ENCODE measurements at regions of chr10 and their contacts with region 1.

Region 1: DNA sequence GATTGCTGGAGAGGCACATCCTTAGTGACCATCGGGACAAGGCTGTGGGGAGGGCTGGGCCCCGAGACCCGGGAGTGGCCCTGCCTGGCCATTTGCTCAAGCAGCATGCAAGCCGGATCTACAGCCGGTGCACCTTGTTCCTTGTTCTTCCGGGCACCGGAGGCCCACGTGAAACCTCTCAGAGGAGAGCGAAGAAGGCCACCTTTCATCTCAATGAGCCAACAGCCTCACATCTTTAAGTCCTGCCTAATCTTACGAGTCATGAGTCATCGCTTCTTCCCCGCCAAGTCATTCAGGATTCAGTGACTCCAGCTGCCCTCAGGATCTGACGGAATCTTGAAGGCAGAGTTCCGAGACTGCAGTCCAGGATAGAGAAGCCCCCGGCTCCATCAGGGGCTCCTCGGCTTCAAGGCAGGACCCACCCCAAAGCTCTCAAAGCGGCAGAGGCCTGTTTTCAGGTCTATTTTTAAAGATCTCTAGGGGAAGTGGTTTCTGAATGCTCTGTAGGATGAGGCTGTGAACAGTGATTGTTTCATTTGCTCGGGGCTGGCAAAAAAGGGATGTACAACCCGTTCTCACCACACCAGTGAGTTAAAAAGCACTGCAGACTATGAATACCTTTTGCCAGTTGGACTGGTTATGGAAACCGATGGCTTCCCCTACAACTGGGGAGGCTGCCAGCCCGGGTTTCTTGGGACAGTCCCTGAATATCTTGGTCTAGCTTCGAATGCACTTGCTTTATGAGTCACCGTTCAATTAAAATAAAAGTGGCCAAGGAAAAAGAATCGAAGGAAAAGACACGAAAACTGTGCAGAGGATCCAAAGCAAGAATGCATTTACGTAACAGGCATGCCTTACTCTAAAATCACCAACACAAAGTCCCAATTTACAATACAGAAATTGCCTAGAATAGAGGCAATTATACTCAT is 57.2 kb upstream of the ECHDC3 start:
- DNase-seq: peak; percentile 45 to 89 (median 83)
- ATAC-seq: peak; percentile 86
- H3K4me3 ChIP-seq: peak overlapping the region; percentile 49
- H3K4me3 Mint-ChIP-seq: peak overlapping the region; percentile 82 to 91 (median 89)
- H3K27ac ChIP-seq: peak overlapping the region; percentile 78
- H3K27ac Mint-ChIP-seq: peak overlapping the region; percentile 92 to 99 (median 97)
- H3K4me1 ChIP-seq: peaks cover 26 to 51% of the 10 kb centered on the region in 2 donors
- H3K4me1 Mint-ChIP-seq: peaks cover 25 to 85% (median 78%) of the 10 kb centered on the region in 7 donors
- H3K27me3 ChIP-seq: no peaks in the 10 kb centered on the region
- H3K27me3 Mint-ChIP-seq: peaks cover 0 to 67% (median 0%) of the 10 kb centered on the region in 5 donors

Region 2: DNA sequence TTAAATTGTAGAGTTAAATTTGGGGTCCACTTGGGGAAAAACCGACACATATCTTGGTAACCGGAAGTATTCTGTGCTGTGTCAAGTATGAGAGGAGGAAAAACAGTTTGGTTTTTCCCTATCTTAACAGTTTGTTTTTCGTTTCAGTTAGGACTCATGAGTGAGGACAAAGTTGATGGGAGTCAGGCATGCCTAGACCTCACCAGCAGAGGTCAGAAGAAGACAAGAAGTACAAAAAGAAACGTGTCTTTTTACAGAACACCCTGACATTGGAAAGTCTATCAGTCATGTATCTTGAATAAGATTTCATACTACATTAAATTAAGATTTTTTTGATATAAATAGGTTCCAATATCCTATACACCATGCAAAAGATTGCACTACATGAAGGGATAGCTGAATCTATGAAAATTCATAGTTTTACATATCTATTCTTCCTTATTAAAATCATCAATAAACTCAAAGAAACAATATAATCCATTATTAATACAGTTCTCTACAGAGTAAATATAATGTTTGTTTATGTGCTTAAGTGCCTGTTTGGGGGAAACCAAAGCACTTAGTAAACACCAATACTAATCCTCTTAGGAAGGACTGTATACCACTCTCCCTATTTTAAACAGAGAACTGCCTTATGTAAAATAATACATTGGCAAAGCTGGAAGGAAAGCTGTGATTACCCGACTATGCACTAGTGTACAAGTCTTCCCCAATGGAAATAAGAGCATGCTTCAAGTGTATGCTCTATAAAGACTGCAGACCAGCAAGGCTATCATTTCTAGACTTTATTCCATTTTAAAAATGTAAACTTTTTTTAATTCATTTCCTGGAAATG is 169.2 kb before region 1 on chr10:
- CTCF ChIA-PET with region 1: interaction called, 3 read pairs
- POLR2A ChIA-PET with region 1: no interaction called
- intact Hi-C with region 1: loop called in 1 of 2 experiments (anchors 2 kb)
- DNase-seq: peak in 7 of 9 donors; percentile 45 to 75 (median 64)
- ATAC-seq: peak; percentile 81
- H3K4me3 ChIP-seq: no peak overlapping the region
- H3K4me3 Mint-ChIP-seq: no peak overlapping the region
- H3K27ac ChIP-seq: no peak overlapping the region
- H3K27ac Mint-ChIP-seq: peak overlapping the region in 1 of 9 donors; percentile 33
- H3K4me1 ChIP-seq: peaks cover 0 to 5% of the 10 kb centered on the region in 2 donors
- H3K4me1 Mint-ChIP-seq: peaks cover 0 to 16% (median 4%) of the 10 kb centered on the region in 7 donors
- H3K27me3 ChIP-seq: no peaks in the 10 kb centered on the region
- H3K27me3 Mint-ChIP-seq: peaks cover 0 to 36% (median 0%) of the 10 kb centered on the region in 5 donors

Region 3: GRCh38 chr10:11673346-11674280 is 11.4 kb before region 1 on chr10:
- CTCF ChIA-PET with region 1: interaction called, 4 read pairs
- POLR2A ChIA-PET with region 1: interaction called, 7 read pairs
- intact Hi-C with region 1: loop called in 1 of 2 experiments (anchors 1 kb)
- DNase-seq: no peak
- ATAC-seq: no peak
- H3K4me3 ChIP-seq: no peak overlapping the region
- H3K4me3 Mint-ChIP-seq: peak overlapping the region in 5 of 10 donors; percentile 3 to 51 (median 25)
- H3K27ac ChIP-seq: no peak overlapping the region
- H3K27ac Mint-ChIP-seq: peak overlapping the region in 1 of 9 donors; percentile 54
- H3K4me1 ChIP-seq: peaks cover 0 to 14% of the 10 kb centered on the region in 2 donors
- H3K4me1 Mint-ChIP-seq: peaks cover 3 to 45% (median 23%) of the 10 kb centered on the region in 7 donors
- H3K27me3 ChIP-seq: no peaks in the 10 kb centered on the region
- H3K27me3 Mint-ChIP-seq: peaks cover 0 to 34% (median 0%) of the 10 kb centered on the region in 5 donors

Region 4: GRCh38 chr10:11724938-11725776 is 40.2 kb after region 1 on chr10:
- CTCF ChIA-PET with region 1: interaction called, 4 read pairs
- POLR2A ChIA-PET with region 1: no interaction called
- intact Hi-C with region 1: loop called in 1 of 2 experiments (anchors 1 kb)
- DNase-seq: peak in 7 of 9 donors; percentile 25 to 61 (median 55)
- ATAC-seq: peak; percentile 81
- H3K4me3 ChIP-seq: no peak overlapping the region
- H3K4me3 Mint-ChIP-seq: peak overlapping the region in 1 of 10 donors; percentile 44
- H3K27ac ChIP-seq: no peak overlapping the region
- H3K27ac Mint-ChIP-seq: peak overlapping the region in 1 of 9 donors; percentile 13
- H3K4me1 ChIP-seq: no peaks in the 10 kb centered on the region
- H3K4me1 Mint-ChIP-seq: peaks cover 0 to 8% (median 5%) of the 10 kb centered on the region in 7 donors
- H3K27me3 ChIP-seq: no peaks in the 10 kb centered on the region
- H3K27me3 Mint-ChIP-seq: peaks cover 0 to 43% (median 5%) of the 10 kb centered on the region in 5 donors

Region 5: DNA sequence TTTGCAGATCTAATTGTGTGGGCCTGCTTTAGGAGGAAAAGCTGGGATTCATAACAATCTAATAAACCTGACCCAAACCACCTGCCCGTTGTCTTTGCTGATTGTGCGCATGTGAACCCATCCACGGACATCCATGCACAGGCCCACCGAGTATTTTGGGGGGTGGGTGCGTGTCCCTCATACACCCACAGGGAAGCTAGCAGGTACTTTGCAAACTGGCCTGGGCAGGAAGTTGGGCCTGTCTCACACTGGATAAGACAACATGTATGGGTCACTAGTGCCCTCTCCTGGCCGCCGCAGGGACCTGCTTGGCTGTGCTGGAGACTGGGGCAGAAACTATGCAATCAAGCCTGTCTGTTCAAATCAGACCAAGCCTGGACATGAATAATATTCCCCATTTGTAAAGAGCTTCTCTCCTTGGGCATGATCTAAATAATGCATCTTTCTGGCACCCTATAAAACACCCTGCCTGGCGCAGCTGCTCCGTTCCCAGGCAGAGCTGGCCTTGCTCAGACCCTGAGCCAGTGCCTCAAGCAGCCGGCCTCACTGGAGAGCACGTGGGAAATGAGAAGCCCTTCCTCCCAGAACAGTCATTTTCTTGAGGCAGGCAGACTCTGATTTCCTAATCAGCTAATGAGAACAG is 73.0 kb after region 1 on chr10:
- CTCF ChIA-PET with region 1: interaction called, 4 read pairs
- POLR2A ChIA-PET with region 1: interaction called, 3 read pairs
- intact Hi-C with region 1: loop called in 1 of 2 experiments (anchors 1 kb)
- DNase-seq: peak; percentile 66 to 86 (median 79)
- ATAC-seq: peak; percentile 95
- H3K4me3 ChIP-seq: no peak overlapping the region
- H3K4me3 Mint-ChIP-seq: no peak overlapping the region
- H3K27ac ChIP-seq: no peak overlapping the region
- H3K27ac Mint-ChIP-seq: peak overlapping the region in 4 of 9 donors; percentile 26 to 77 (median 54)
- H3K4me1 ChIP-seq: peaks cover 0 to 6% of the 10 kb centered on the region in 2 donors
- H3K4me1 Mint-ChIP-seq: peaks cover 4 to 6% (median 5%) of the 10 kb centered on the region in 7 donors
- H3K27me3 ChIP-seq: no peaks in the 10 kb centered on the region
- H3K27me3 Mint-ChIP-seq: peaks cover 0 to 8% (median 0%) of the 10 kb centered on the region in 5 donors

Region 6: DNA sequence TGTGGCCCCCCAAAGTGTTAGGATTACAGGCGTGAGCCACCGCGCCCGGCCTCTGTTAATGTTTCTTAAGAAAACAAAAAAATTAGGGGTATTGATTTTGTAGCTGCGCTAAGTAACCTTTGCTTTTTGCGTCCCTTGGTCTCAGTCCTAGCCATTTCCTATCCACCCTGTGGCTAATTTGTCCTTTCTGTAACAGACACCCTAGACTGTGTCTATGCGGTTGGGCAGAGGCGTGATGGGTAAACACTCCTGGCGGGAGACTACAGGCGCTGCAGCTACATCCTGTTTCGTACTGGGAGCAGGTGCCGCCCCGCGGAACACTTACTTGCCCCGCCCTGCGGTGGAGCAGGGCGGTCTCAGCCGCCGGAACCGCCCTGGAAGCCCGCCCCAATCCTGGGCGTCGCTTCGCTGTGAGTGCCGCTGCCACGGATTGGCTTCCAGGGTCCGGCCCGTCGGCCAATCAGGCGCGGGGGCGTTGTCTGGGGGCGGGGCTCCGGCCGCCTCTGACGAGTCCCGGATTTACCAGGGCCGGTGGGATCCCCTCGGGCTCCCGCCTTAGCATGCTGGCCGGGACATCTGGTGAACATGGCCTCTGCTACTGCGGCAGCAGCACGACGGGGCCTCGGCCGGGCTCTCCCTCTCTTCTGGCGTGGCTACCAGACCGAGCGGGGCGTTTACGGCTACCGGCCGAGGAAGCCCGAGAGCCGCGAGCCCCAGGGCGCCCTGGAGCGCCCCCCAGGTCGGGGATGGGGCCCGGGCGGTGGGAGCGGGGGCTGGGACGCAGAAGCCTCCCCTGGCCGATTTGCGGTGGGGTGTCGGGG is 383.7 kb after region 1 on chr10 and contains the start of gene DHTKD1:
- CTCF ChIA-PET with region 1: no interaction called
- POLR2A ChIA-PET with region 1: no interaction called
- intact Hi-C with region 1: loop called in 1 of 2 experiments (anchors 2 kb)
- DNase-seq: peak; percentile 96 to 100 (median 98)
- ATAC-seq: peak; percentile 99
- H3K4me3 ChIP-seq: peak within 1 kb of the TSS; percentile 85
- H3K4me3 Mint-ChIP-seq: peak within 1 kb of the TSS; percentile 84 to 92 (median 88)
- H3K27ac ChIP-seq: peak within 1 kb of the TSS; percentile 85
- H3K27ac Mint-ChIP-seq: peak within 1 kb of the TSS; percentile 85 to 99 (median 95)
- H3K4me1 ChIP-seq: peaks cover 6 to 15% of the 10 kb centered on the region in 2 donors
- H3K4me1 Mint-ChIP-seq: peaks cover 12 to 27% (median 20%) of the 10 kb centered on the region in 7 donors
- H3K27me3 ChIP-seq: no peaks in the 10 kb centered on the region
- H3K27me3 Mint-ChIP-seq: no peaks in the 10 kb centered on the region
- total RNA-seq, gene DHTKD1: 10.8 to 25.9 (median 12.5) TPM

Measured in naive thymus-derived CD4-positive, alpha-beta T cell (primary cell).